Activated T-helper 2 cell treated with anti-CD3 and anti-CD28 coated beads, Interferon-gamma antibody, Interleukin-2, Interleukin-4, amounts not matched to agents 10 μg/mL and 5 μg/mL and 100 μg/mL, durations not matched to agents 14 hours and 24 hours and 36 hours (primary cell): ENCODE measurements at regions of chrX and their contacts with region 1.

Region 1: GRCh38 chrX:56382278-56382677 is 150.1 kb downstream of the KLF8 start:
- DNase-seq: no peak
- H3K4me3 Mint-ChIP-seq: no peak overlapping the region
- H3K27ac Mint-ChIP-seq: peak overlapping the region; percentile 85
- H3K4me1 Mint-ChIP-seq: peaks cover 32% of the 10 kb centered on the region
- H3K27me3 Mint-ChIP-seq: no peaks in the 10 kb centered on the region

Region 2: GRCh38 chrX:56368962-56369361 is 13.3 kb before region 1 on chrX:
- intact Hi-C with region 1: loop called (anchors 1 kb)
- DNase-seq: no peak
- H3K4me3 Mint-ChIP-seq: peak overlapping the region; percentile 8
- H3K27ac Mint-ChIP-seq: peak overlapping the region; percentile 9
- H3K4me1 Mint-ChIP-seq: peaks cover 39% of the 10 kb centered on the region
- H3K27me3 Mint-ChIP-seq: no peaks in the 10 kb centered on the region